PC-3 (cell line): ENCODE measurements at regions of chr12 and their contacts with region 1.

Region 1: GRCh38 chr12:39178837-39179236 is 264.1 kb downstream of the KIF21A start:
- DNase-seq: peak; percentile 84
- ATAC-seq: peak; percentile 96
- H3K4me3 ChIP-seq: no peak overlapping the region
- H3K27ac ChIP-seq: peak overlapping the region; percentile 92
- H3K4me1 ChIP-seq: peaks cover 28% of the 10 kb centered on the region
- H3K27me3 ChIP-seq: no peaks in the 10 kb centered on the region
- CTCF ChIP-seq: no peak

Region 2: DNA sequence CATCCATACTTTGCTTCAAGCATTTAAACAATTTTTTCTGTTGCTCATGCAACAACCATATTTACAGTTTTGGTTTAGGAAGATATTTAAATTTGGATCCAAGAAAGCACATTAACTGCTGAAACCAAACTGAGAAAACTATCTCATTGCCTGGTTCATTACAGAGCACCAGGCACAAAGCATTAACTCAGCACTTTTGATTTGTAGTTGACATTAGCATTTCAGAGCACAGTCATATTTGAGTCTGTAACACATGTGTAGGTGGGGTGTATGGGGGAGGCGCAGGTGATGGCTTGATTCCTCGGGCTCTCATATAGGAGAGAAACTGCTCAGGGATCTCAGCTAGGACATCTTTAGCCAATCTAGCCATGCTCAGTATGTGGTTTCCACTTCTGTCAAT is 525.2 kb before region 1 on chr12:
- CTCF ChIA-PET with region 1: no interaction called
- POLR2A ChIA-PET with region 1: interaction called, 13 read pairs
- intact Hi-C with region 1: no loop called
- DNase-seq: no peak
- ATAC-seq: no peak
- H3K4me3 ChIP-seq: no peak overlapping the region
- H3K27ac ChIP-seq: no peak overlapping the region
- H3K4me1 ChIP-seq: no peaks in the 10 kb centered on the region
- H3K27me3 ChIP-seq: no peaks in the 10 kb centered on the region
- CTCF ChIP-seq: no peak

Region 3: DNA sequence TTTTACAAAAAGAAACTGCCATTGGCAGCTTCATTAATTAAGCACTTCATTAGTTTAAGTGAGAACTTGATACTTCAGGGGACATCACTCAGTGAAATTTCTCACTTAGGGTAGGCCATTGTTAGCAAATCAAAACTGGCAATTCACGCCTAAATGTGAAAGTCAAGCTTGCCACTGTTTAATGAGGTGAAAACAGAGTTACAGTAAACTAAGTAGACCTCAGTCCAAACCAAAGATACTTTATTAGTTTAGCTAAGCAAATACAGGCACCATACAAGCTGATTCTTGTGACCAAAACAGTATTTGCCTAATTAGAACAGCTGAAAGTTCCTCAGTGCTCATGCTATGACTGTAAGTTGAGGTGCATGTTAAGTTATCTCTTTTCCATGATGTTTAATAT is 96.9 kb before region 1 on chr12:
- CTCF ChIA-PET with region 1: no interaction called
- POLR2A ChIA-PET with region 1: no interaction called
- intact Hi-C with region 1: no loop called
- DNase-seq: no peak
- ATAC-seq: no peak
- H3K4me3 ChIP-seq: no peak overlapping the region
- H3K27ac ChIP-seq: no peak overlapping the region
- H3K4me1 ChIP-seq: no peaks in the 10 kb centered on the region
- H3K27me3 ChIP-seq: no peaks in the 10 kb centered on the region
- CTCF ChIP-seq: no peak

Region 4: DNA sequence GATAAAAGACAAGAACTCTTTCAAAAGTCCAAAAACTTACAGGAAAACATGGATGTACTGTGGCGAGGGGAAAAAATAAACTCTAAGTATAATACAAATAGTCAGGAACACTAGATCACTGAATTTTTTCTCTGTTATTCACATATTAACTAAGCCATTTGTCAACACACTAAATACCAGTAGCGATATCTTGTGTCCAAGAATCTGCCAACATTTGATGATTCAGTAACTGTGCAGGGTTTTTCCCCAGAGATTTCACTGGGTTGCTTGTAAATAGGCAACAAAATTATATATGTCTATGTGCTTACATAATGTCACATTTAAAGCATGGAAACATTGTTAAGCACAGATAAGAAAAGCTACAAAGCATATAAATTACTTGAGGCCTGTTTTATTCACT is 58.2 kb after region 1 on chr12:
- CTCF ChIA-PET with region 1: no interaction called
- POLR2A ChIA-PET with region 1: interaction called, 4 read pairs
- intact Hi-C with region 1: loop called (anchors 1 kb)
- DNase-seq: peak; percentile 96
- ATAC-seq: peak; percentile 84
- H3K4me3 ChIP-seq: peak overlapping the region; percentile 48; the same call in 1 of the 2 replicates
- H3K27ac ChIP-seq: peak overlapping the region; percentile 98
- H3K4me1 ChIP-seq: peaks cover 29% of the 10 kb centered on the region
- H3K27me3 ChIP-seq: no peaks in the 10 kb centered on the region
- CTCF ChIP-seq: no peak

Region 5: DNA sequence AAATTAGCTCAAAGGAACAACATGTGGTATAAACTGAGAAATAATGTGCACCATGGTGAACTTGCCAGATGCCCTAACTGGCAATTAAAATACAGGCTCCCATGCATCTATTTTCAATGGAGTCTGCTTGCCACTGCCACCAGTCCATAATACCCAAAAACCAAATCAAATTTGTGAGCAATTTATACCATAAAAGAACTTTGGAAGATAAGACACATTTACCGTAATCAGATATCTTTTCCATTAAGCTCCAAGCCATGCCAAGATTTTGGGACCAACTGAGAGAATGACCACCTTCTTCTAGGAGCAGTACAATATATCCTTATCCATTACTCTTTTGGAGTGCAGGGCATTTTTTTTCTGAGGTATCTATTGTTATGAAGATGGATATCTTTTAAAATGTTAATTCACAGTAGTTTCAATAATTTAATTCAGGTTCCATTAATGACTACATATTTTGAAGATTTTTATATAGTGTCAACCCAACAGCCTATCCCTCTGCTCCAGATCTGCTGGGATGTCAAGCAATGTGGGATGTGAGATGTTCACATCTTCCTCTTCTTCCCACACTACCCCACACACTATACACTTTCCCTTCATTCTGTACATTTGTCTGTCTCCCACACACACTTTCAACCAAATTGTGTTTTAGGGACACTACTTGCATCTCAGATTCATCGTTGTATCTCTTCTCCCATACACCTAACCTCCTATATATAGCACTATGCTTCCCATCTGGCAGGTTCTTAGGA is 210.7 kb after region 1 on chr12:
- CTCF ChIA-PET with region 1: no interaction called
- POLR2A ChIA-PET with region 1: no interaction called
- intact Hi-C with region 1: no loop called
- DNase-seq: no peak
- ATAC-seq: no peak
- H3K4me3 ChIP-seq: no peak overlapping the region
- H3K27ac ChIP-seq: no peak overlapping the region
- H3K4me1 ChIP-seq: no peaks in the 10 kb centered on the region
- H3K27me3 ChIP-seq: no peaks in the 10 kb centered on the region
- CTCF ChIP-seq: no peak